Right cardiac atrium (tissue), 5 donors: ENCODE measurements at regions of chr21 and their contacts with region 1.

Region 1: GRCh38 chr21:44510508-44511210 is 29.3 kb downstream of the KRTAP10-1 start:
- DNase-seq: peak; percentile 40 to 79 (median 75)
- ATAC-seq: peak; percentile 27 to 47
- H3K4me3 ChIP-seq: no peak overlapping the region
- H3K27ac ChIP-seq: no peak overlapping the region
- H3K4me1 ChIP-seq: no peaks in the 10 kb centered on the region
- H3K27me3 ChIP-seq: no peaks in the 10 kb centered on the region

Region 2: DNA sequence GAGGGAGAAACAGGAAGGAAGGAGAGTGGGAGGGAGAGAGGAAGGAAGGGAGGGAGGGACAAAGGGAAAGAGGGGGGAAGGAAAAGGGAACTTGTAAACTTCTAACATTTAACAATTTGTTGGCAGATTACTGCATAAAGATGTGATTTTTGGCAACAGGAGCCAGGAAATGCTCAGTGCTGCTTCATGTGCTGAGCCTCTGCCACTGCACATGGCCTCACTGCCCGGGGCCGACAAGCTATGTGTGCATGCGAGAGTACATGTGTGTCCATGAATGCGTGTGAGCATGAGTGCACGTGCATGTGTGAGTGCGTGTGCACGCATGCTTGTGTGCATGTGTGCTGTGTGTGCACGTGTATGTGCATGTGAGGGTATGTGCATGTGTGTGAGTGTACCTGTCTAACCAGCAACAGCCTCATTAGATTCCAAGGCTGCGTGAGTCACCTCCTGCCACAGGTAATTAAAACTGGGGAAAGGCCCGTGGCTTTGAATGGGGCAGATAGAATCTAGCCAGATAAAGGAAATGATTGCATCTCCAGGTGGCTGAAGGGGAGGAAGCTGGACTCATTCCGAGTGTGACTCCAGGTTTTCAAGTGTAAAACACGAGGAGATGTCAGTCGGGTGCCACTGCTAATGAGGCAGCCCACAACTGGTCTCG is 242.1 kb after region 1 on chr21:
- intact Hi-C with region 1: loop called in 1 of 4 experiments (anchors 10 kb)
- DNase-seq: no peak
- ATAC-seq: no peak
- H3K4me3 ChIP-seq: no peak overlapping the region
- H3K27ac ChIP-seq: no peak overlapping the region
- H3K4me1 ChIP-seq: no peaks in the 10 kb centered on the region
- H3K27me3 ChIP-seq: no peaks in the 10 kb centered on the region

Region 3: DNA sequence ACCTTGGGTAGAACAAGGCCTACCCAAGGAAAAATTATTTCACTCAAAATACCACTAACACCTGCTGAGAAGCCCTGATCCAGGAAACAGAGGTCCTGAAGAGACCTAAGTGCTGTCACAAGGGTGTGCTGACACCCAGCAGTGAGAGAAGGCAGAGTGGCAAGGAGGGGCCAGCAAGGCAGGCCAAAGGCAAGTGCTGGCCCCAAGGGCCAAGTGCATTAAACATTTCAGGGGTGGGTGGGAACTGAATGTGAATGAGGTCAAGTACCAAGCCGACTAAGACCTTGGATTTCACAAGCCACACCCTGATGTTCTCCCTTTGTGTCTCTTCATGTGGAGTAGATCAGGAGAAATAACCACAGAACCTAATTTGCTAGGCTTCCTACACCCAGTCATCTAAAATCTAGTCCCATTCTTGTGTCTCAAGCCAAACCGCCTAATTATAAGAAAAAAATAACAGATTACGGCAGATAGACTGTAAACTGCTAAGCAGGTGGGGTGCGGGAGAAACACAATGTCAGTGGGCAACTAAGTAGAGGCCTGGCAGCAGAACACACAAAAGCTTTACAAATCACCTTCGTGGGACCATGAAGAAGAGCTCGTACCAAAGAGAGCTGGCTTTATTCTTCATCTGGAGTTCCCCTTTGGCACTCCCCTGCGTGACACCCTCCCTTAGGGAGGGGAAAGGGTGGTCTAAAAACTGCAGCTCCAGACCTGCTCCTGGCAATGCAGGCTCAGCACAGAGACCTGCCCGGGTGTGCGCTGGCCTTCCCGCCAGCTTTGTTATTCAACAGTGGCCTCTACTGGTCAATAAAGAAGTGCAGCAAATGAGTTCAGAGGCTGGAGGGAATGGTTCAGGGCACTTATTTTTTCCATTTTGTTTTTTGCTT is 282.3 kb after region 1 on chr21:
- intact Hi-C with region 1: loop called in 1 of 4 experiments (anchors 10 kb)
- DNase-seq: peak in 2 of 3 donors; percentile 76 to 79
- ATAC-seq: peak; percentile 86 to 87
- H3K4me3 ChIP-seq: no peak overlapping the region
- H3K27ac ChIP-seq: no peak overlapping the region
- H3K4me1 ChIP-seq: peaks cover 5% of the 10 kb centered on the region
- H3K27me3 ChIP-seq: no peaks in the 10 kb centered on the region